BJ (cell line): ENCODE measurements at regions of chr4 and their contacts with region 1.

Region 1: DNA sequence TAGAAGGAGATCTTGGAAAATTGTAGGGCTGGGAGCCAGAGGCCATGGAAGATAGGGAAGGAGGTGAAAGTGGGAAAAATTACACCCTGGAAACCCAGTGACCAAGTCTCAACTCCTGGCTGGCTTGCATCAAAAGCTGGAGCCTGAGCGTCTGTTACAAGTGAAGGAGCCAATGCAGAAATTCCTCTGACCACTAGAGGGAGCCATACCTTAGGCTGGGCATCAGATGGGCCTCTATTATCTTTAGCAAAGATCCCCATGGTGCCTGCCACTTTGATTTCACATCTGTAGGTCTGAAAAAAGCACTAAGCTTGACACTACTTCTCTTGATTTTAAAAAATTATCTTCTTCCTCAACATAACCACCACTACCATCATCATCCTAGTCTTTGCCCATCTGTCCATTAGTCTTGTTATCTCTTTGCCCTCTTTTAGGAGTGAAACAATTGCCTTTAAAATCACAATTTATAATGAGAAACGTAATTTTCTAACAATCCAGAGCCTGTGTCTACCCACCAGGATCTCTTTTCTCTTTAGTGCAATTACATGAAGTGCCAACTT is 62.9 kb downstream of the ANAPC4 start:
- DNase-seq: no peak
- H3K4me3 ChIP-seq: no peak overlapping the region
- H3K27me3 ChIP-seq: no peaks in the 10 kb centered on the region; the same call in 1 of the 2 replicates
- CTCF ChIP-seq: peak; percentile 92

Region 2: DNA sequence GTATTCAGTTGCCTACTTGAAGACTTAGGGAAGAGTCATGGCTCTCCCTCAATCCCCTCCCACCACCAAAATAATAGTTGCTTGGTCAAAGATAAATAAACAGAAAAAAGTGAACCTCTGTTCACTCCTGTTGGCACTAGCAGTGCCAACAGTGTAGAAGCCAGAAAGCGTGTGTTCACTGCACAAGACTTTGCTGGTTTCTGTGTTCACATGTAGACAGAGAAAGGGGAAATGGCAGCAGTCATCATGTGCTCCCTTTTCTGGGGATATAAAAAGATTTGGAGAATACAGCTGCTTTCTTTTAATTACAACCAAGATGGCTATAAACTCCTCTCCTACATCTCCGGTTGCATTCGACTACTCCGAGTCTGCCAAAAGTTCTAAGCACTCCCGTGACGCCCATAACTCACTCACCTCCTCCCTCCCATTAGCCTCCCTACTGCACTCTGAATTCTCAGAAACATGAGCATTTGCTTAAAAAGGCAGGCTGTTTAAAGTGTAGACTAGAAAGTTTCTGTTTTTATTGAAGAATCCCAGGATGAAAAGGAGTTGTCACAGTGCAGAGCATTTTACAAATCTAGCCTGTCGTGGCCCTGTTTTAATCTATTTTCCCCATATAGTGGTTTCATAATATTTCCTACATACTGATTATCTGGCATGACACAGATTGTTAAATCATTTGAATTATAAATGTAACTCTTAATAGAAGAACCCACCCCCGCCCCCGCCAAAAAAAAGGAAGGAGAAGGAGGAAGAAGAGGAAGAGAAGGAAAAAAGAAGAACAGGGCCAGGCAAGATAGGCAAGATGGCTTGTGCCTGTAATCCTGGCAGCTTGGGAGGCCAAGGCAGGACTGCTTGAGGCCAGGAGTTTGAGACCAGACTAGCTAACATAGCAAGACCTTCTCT is 426.0 kb before region 1 on chr4:
- CTCF ChIA-PET with region 1: no interaction called
- POLR2A ChIA-PET with region 1: no interaction called
- DNase-seq: no peak
- H3K4me3 ChIP-seq: no peak overlapping the region
- H3K27me3 ChIP-seq: peaks cover 6% of the 10 kb centered on the region
- CTCF ChIP-seq: no peak

Region 3: DNA sequence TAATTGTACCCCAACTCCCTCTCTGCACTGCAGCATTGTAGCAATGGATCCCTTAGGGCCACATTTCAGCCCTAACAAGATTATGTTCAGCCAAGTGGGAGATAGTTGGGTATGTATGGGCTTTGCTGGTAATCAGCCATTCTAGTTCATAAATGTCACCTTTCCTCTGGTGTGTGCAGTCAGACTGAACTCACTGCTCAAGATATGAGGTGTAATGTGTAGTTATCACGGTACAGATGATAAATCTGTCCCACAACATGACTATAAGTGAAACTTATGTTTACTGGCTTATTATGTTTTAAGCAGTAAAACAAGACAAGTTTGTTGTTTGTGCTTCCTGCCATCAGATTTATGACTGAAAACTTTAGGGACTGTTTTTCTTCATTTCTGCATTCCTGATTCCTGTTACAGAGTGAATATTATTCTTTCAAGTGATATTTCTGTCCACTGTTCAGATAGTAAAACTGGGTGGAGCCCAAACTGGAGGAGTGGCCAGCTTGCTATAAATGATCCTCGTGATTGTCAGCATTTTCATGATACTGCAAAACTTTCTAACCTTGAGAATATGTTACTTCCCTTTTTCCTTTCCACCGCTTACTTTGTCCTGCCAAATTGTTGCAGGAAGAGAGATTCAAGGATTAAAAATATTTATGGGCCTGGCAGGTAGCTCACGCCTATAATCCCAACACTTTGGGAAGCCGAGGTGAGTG is 18.0 kb before region 1 on chr4:
- CTCF ChIA-PET with region 1: interaction called, 25 read pairs
- POLR2A ChIA-PET with region 1: no interaction called
- DNase-seq: no peak
- H3K4me3 ChIP-seq: no peak overlapping the region
- H3K27me3 ChIP-seq: no peaks in the 10 kb centered on the region
- CTCF ChIP-seq: no peak

Region 4: DNA sequence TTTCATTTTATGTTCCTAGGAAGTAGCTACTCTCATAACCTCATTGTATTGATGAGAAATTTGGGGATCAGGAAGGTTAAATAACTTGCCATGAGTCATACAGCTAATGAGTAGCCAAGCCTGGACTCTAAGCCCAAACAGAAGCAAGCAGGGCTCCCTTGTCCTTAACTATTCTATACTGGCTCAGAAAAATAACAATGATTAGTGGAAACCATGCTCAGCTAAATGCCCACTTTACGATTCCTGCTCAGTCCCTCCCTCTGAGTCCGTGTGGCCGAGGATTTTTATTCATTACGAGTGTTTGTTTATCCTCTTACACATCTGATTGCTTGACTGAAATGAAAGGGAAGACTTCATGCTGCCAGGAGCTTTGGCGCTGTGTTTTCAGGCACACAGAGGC is 316.5 kb after region 1 on chr4:
- CTCF ChIA-PET with region 1: interaction called, 325 read pairs
- POLR2A ChIA-PET with region 1: no interaction called
- DNase-seq: no peak
- H3K4me3 ChIP-seq: no peak overlapping the region
- H3K27me3 ChIP-seq: no peaks in the 10 kb centered on the region
- CTCF ChIP-seq: no peak

Region 5: GRCh38 chr4:25908491-25908901 is 468.5 kb after region 1 on chr4:
- CTCF ChIA-PET with region 1: interaction called, 11 read pairs
- POLR2A ChIA-PET with region 1: no interaction called
- DNase-seq: peak; percentile 91
- H3K4me3 ChIP-seq: no peak overlapping the region
- H3K27me3 ChIP-seq: peaks cover 2% of the 10 kb centered on the region; the same call in 1 of the 2 replicates
- CTCF ChIP-seq: no peak